ENCODE measurements at regions of chr15 and their contacts with region 1.

Region 1: DNA sequence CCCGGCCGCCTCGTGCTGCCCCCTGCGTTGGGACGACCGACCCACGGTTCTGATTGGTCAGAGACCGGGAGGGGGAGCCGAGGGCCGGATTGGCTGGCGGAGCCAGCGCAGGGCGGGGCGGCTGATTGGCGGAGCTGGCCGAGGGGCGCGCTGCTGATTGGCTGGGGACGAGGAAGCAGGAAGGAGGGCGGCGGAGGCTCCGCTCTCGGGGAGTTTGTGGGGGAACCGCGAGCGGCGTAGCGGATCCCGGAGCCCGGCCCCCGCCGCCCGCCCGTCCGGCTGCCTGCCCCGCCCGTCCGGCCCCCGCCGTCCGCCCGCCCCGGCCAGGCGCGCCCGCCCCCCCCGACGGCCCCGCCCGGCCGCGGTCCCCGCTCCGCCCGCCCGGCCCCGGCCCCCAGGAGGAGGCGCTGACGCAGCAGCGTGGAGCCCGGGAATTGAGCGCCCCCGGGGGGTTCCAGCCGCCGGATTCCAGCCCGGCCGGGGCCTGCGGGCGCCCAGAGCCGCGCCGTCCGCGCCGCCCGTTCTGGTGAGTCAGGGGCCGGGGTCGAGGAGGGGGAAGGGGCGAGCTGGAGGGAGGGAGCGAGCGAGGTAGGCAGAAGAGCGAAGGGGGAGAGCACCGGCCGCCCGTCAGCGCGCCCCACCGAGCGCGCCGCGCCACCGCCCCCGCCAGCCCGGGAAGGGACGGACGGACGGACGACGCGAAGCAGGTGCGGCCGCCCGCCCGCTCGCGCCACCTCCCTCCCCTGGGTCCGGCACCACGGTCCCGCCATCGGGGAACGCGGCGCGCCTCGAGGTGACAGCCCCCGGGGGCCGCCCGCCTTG is at the start of gene BAHD1:
- DNase-seq: peak; percentile 97
- ATAC-seq: peak; percentile 92
- H3K4me3 Mint-ChIP-seq: peak within 1 kb of the TSS; percentile 82
- H3K27ac Mint-ChIP-seq: peak within 1 kb of the TSS; percentile 75
- H3K4me1 Mint-ChIP-seq: peaks cover 56% of the 10 kb centered on the region
- H3K27me3 Mint-ChIP-seq: peaks cover 29% of the 10 kb centered on the region
- total RNA-seq, gene BAHD1: 15.3 to 16.7 TPM

Region 2: GRCh38 chr15:40357723-40358470 is 83.1 kb before region 1 on chr15 and contains the start of gene DISP2:
- CTCF ChIA-PET with region 1: interaction called, 3 read pairs
- POLR2A ChIA-PET with region 1: no interaction called
- intact Hi-C with region 1: loop called in 1 of 2 experiments (anchors 1 kb)
- DNase-seq: peak; percentile 93
- ATAC-seq: peak; percentile 94
- H3K4me3 Mint-ChIP-seq: peak within 1 kb of the TSS; percentile 67
- H3K27ac Mint-ChIP-seq: peak within 1 kb of the TSS; percentile 20
- H3K4me1 Mint-ChIP-seq: peaks cover 3% of the 10 kb centered on the region
- H3K27me3 Mint-ChIP-seq: peaks cover 7% of the 10 kb centered on the region
- total RNA-seq, gene DISP2: 0.02 to 0.04 TPM

Region 3: DNA sequence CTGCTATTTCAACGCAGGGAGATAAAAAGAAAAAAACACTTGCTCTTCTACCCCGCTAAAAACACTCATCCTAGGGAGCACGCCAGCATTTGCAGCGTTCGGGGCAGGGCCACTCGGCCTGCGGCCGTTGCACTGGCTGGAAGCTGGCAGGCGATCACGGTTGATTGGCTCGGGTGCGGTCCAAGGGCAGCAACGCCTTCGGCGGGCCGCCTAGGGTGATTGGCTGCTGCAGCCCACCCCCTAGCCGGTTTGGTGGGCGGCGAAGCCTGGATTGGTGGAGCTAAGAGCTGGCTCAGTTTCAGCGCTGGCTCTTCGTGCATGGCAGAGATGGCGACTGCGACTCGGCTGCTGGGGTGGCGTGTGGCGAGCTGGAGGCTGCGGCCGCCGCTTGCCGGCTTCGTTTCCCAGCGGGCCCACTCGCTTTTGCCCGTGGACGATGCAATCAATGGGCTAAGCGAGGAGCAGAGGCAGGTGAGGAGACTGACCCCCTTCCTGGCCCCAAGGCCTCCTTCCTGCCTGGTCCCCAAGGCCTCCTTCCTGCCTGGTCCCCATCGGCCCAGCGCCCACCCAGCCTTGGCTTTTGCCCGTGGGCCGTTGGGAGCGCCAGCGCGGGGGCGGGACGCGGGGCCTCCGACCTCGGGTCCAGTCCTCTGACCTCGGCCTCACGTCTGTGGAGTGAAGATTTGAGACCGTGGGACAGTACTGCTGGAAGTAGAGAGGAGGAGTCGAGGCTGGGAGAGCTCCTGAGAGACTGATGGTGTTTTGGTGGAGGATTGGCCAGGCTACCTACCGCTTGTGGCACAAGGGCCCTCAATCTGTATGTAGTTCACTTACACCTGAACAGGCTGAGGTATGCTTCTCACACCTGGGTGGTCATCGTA is 35.2 kb before region 1 on chr15 and contains the start of gene IVD:
- CTCF ChIA-PET with region 1: interaction called, 4 read pairs
- POLR2A ChIA-PET with region 1: interaction called, 10 read pairs
- intact Hi-C with region 1: loop called in 1 of 2 experiments (anchors 1 kb)
- DNase-seq: peak; percentile 95
- ATAC-seq: peak; percentile 97
- H3K4me3 Mint-ChIP-seq: peak within 1 kb of the TSS; percentile 78
- H3K27ac Mint-ChIP-seq: peak within 1 kb of the TSS; percentile 95
- H3K4me1 Mint-ChIP-seq: peaks cover 52% of the 10 kb centered on the region
- H3K27me3 Mint-ChIP-seq: no peaks in the 10 kb centered on the region
- total RNA-seq, gene IVD: 30.8 to 46.2 TPM

Region 4: GRCh38 chr15:40470423-40471104 is 29.6 kb after region 1 on chr15 and contains the start of gene CHST14:
- CTCF ChIA-PET with region 1: interaction called, 3 read pairs
- POLR2A ChIA-PET with region 1: interaction called, 3 read pairs
- intact Hi-C with region 1: loop called in 1 of 2 experiments (anchors 1 kb)
- DNase-seq: peak; percentile 64
- ATAC-seq: peak; percentile 58
- H3K4me3 Mint-ChIP-seq: peak within 1 kb of the TSS; percentile 76
- H3K27ac Mint-ChIP-seq: peak within 1 kb of the TSS; percentile 74
- H3K4me1 Mint-ChIP-seq: peaks cover 23% of the 10 kb centered on the region
- H3K27me3 Mint-ChIP-seq: no peaks in the 10 kb centered on the region
- total RNA-seq, gene CHST14: 5.4 to 6.2 TPM

Region 5: DNA sequence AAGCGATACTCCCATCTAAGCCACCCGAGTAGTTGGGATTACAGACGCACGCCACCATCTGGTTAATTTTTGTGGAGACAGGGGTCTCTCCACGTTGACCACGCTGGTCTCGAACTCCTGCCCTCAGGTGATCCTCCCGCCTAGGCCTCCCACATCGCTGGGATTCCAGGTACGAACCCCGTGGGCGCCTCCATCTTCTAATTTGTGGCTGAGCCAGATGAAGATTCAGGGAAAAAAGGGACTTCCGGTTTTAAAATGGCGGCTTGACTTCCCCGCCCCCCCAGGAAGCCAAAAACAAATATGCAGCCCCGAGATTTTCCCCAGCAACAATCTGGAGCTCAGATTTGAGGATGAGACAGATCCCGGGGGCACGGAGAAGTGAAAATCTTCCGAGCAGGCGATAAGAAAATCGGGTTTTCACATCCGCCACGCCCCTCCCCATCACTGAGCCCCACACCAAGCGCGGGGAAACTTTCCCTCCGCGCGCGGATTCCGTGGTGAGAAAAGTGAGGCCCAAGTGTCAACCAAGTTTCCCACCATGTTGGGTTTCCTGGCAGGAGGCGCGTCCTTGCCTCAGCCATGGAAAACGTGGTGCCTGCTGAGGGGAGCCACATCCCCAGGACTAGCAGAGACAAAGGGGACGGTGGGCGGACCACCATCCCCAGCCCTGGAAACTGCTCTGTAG is 45.3 kb after region 1 on chr15:
- CTCF ChIA-PET with region 1: no interaction called
- POLR2A ChIA-PET with region 1: no interaction called
- intact Hi-C with region 1: no loop called
- DNase-seq: no peak
- ATAC-seq: no peak
- H3K4me3 Mint-ChIP-seq: no peak overlapping the region
- H3K27ac Mint-ChIP-seq: no peak overlapping the region
- H3K4me1 Mint-ChIP-seq: no peaks in the 10 kb centered on the region
- H3K27me3 Mint-ChIP-seq: peaks cover 3% of the 10 kb centered on the region

Region 6: DNA sequence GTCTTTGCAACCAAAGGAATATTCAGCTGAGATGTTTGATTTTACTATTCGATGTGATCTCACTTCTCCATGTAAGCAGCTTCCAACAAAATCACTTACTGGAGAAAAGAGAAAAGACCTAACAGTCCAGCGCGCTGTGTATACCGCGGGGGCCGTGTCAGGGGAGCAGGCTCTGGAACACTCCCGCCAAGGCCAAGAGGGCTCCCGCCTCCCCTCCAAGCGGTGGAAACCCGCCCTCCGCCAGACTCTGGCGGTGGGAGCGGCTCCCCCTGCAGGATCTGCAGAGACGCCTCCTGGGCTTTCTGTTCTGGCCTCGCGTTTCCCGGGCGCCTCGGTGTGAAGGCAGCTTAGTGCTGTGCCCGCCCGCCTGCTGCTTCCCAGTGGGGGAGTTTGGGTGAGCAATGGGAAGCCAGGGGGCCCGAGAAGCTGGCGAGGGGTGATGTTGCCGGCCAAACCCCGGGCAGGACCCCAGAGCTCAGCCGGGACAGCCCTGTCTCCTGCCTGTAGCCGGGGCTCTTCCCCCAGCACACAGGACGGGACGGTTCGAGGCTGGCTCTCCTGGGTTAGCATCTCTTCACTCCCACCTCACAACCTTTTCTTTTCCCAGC is 66.1 kb after region 1 on chr15:
- CTCF ChIA-PET with region 1: interaction called, 5 read pairs
- POLR2A ChIA-PET with region 1: no interaction called
- intact Hi-C with region 1: loop called (anchors 1 to 5 kb)
- DNase-seq: peak; percentile 82
- ATAC-seq: peak; percentile 86
- H3K4me3 Mint-ChIP-seq: peak overlapping the region; percentile 6
- H3K27ac Mint-ChIP-seq: no peak overlapping the region
- H3K4me1 Mint-ChIP-seq: peaks cover 16% of the 10 kb centered on the region
- H3K27me3 Mint-ChIP-seq: peaks cover 50% of the 10 kb centered on the region

Region 7: GRCh38 chr15:40593588-40594428 is 152.9 kb after region 1 on chr15 and contains the start of gene KNL1:
- CTCF ChIA-PET with region 1: no interaction called
- POLR2A ChIA-PET with region 1: interaction called, 9 read pairs
- intact Hi-C with region 1: loop called in 1 of 2 experiments (anchors 1 kb)
- DNase-seq: peak; percentile 94
- ATAC-seq: peak; percentile 86
- H3K4me3 Mint-ChIP-seq: peak within 1 kb of the TSS; percentile 87
- H3K27ac Mint-ChIP-seq: peak within 1 kb of the TSS; percentile 95
- H3K4me1 Mint-ChIP-seq: peaks cover 24% of the 10 kb centered on the region
- H3K27me3 Mint-ChIP-seq: peaks cover 6% of the 10 kb centered on the region
- total RNA-seq, gene KNL1: 26.2 to 33.5 TPM

Region 8: DNA sequence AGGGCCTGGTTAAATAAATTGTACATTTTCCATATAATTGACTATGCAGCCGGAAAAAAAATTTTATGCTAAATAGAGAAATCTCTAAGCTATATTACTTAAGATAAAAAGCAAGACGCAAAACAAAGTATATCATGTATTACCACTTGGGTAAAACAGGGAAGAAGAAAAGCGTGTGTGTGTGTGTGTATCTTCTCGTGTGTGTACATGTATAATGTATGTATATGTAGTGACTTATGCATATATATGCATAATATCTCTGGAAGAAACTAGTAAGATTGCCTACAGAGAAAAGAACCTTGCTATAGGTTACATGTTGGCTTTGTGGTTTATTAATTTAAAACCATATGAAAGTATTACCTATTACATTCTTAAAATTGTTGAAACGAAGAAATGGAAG is 172.1 kb after region 1 on chr15:
- CTCF ChIA-PET with region 1: no interaction called
- POLR2A ChIA-PET with region 1: no interaction called
- intact Hi-C with region 1: no loop called
- DNase-seq: no peak
- ATAC-seq: no peak
- H3K4me3 Mint-ChIP-seq: no peak overlapping the region
- H3K27ac Mint-ChIP-seq: no peak overlapping the region
- H3K4me1 Mint-ChIP-seq: no peaks in the 10 kb centered on the region
- H3K27me3 Mint-ChIP-seq: no peaks in the 10 kb centered on the region

Region 9: DNA sequence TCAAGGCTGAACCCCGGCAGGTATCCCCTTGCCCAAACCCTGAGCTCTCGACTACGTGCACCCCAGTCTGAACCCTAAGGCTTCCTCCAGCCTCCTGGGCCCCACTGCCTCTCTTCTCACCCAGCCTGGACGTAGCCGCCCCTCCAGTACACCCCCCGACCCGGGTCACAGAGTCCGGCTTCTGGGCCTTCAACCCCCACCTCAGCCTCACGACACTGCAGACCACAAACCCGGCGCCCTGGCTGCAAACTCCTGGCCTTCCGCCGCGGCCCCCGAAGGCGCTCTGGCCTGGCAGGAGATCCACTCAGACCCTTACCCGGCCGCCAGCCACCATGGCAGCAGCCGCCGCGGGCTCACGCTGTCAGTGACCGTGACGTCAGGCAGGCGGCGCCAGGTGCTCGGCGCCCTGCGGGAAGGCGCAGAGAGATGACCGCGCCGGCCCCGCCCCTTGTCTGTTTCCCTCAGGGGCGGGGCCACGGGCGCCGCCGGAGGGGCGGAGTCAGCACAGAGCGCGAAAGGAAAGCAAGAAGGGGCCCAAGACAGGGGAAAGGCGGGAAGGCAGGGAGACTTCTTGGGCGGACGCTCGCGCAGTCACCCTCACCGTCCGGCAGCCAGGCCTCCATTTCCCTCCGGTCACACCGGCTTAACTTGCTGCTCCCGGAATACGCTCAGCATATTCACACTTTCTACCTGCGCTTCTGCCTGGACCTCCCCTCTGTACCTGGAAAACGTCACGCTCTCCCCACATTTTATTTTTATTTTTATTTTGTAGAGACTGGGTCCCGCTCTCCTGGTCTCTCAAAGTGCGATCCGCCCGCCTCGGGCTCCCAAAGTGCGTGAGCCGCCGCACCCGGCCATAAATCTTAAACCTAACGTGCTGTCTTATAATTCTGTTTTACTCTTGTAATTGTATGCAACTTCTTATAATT is 314.2 kb after region 1 on chr15 and contains the start of gene RMDN3:
- CTCF ChIA-PET with region 1: no interaction called
- POLR2A ChIA-PET with region 1: no interaction called
- intact Hi-C with region 1: loop called in 1 of 2 experiments (anchors 1 kb)
- DNase-seq: peak; percentile 97
- ATAC-seq: peak; percentile 92
- H3K4me3 Mint-ChIP-seq: peak within 1 kb of the TSS; percentile 91
- H3K27ac Mint-ChIP-seq: peak within 1 kb of the TSS; percentile 99
- H3K4me1 Mint-ChIP-seq: peaks cover 27% of the 10 kb centered on the region
- H3K27me3 Mint-ChIP-seq: no peaks in the 10 kb centered on the region
- total RNA-seq, gene RMDN3: 12.3 to 18.8 TPM

Measured in activated CD4-positive, alpha-beta T cell treated with anti-CD3 and anti-CD28 coated beads for 36 hours (primary cell).